ENCODE measurements at regions of chr12 and their contacts with region 1.

Region 1: DNA sequence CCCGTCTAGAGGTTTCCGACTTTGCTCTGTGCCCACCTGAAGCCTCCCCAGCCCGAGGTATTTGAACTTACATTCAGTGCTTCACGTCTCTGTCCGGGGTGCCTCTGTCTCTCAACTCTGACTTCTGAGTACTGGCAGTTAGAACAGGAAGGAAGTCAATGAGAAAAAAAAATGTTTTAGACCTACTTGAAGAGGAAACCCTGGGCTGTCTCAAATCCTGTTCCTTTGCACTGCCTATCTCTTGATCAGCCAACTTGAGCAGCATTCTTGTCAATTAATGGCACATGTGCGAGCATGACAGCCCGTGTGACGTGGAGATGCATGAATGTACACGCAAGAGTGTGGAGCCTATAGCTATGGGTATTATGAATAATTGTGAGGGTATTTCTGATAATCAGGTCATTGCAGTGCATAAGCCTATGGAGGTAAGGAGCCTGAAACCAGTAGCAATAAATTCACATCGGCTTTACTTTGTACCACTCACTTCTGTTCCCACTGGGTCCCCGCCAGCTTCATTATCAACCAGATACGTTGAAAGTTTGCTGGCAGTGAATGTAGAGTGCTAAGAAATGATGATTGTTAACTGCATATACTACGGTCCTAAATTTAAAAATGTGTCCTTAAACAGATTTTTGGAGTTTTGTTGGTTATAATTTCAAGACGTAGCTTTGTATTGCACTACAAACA is at the start of gene ARHGDIB:
- H3K4me3 Mint-ChIP-seq: peak within 1 kb of the TSS; percentile 97
- H3K27ac Mint-ChIP-seq: peak within 1 kb of the TSS; percentile 99
- H3K4me1 Mint-ChIP-seq: peaks cover 67% of the 10 kb centered on the region
- H3K27me3 Mint-ChIP-seq: no peaks in the 10 kb centered on the region

Region 2: DNA sequence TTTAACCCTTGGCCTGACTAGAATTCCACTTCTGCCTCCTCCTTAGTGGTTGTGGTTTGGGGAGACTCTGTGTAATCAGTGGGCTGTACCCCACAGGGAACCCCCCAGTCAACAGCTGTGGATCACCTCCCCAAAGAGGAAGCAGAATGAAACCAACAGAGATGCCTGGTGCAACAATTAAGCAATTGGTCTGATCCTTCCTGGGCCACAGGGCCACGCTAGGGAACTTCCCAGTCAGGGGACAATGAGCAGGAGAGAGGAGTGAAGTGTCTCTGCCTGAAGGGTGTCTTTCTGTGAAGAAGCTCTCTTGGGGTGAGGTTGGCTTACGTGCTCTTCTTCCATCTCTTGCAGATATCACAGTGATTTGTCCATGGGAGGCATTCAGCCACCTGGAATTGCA is 19.4 kb after region 1 on chr12:
- intact Hi-C with region 1: loop called (anchors 2 kb)
- H3K4me3 Mint-ChIP-seq: peak overlapping the region; percentile 35
- H3K27ac Mint-ChIP-seq: peak overlapping the region; percentile 85
- H3K4me1 Mint-ChIP-seq: peaks cover 69% of the 10 kb centered on the region
- H3K27me3 Mint-ChIP-seq: no peaks in the 10 kb centered on the region